ENCODE measurements at regions of chr20 and their contacts with region 1.

Region 1: DNA sequence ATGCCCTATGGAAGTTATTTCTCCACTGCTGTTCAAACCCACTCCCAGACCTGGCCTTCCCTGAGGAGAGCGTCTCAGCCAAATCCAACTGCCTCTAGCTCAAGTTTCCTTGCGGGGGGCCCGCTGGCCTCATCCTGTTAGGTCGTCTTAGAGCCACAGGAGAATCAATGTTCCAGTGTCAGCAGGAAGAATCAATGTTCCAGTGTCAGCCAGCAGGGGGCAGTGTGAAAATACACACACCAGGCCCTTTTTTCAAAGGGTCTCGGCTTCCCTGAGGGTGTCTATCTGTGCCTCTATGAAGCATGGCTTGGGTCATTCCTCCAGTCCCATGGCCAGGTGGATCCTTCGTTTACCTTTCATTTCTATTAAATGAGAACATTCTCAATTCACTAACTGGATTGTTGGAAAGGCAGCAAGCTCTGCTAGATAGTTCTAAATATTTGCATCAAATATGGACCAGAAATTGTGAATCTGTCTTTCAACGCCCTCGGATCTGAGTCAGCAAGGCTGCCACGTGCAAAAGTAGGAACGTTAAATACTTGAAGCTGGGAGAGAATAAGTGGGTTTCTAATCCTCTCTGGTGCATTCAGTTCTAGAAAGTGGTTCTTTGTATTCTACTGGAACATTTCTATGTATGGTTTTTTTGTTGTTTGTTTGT is 19.2 kb downstream of the PRND start:
- H3K4me3 ChIP-seq: no peak overlapping the region
- H3K27ac ChIP-seq: no peak overlapping the region
- H3K4me1 ChIP-seq: no peaks in the 10 kb centered on the region
- CTCF ChIP-seq: 0 out of 2 replicates have a peak, but pooled peaks have one; percentile 37

Region 2: GRCh38 chr20:4607287-4607713 is 133.6 kb before region 1 on chr20:
- CTCF ChIA-PET with region 1: interaction called, 24 read pairs
- POLR2A ChIA-PET with region 1: no interaction called
- H3K4me3 ChIP-seq: no peak overlapping the region
- H3K27ac ChIP-seq: no peak overlapping the region
- H3K4me1 ChIP-seq: peaks cover 18% of the 10 kb centered on the region
- CTCF ChIP-seq: peak; percentile 76

Region 3: DNA sequence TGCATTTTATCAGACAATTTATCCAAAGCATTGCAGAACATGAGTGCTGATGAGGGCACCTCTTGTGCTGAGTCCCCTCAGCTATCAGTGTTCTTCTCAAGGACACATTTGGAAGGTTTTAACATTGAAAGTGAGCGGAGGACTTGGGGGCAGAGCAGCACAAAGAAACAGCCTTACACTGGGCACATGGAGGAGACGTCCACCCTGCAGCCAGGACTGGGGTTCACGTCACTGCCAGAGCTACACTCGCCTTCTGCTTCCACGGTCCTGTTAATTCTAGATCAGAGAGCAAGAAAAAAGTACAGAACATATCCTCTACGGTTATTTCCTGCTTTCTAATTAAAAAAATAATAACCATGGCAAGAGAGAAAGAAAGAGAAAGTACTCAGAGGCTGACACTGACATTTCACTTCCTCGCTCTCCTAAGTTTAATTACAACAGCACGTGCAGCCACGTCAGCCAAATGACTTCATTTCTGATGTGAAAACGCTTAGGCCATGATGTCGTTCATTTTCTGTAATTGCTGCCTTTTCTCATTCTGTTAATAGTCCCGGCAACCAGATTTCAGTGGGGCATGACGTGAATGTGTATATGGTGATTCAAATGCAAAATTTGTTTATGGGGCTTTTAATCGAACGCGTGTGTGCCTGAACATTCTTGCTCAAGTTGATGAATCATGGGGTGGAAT is 14.0 kb before region 1 on chr20:
- CTCF ChIA-PET with region 1: interaction called, 46 read pairs
- POLR2A ChIA-PET with region 1: no interaction called
- H3K4me3 ChIP-seq: no peak overlapping the region
- H3K27ac ChIP-seq: no peak overlapping the region
- H3K4me1 ChIP-seq: no peaks in the 10 kb centered on the region
- CTCF ChIP-seq: no peak

Region 4: GRCh38 chr20:4829514-4830215 is 88.8 kb after region 1 on chr20:
- CTCF ChIA-PET with region 1: no interaction called
- POLR2A ChIA-PET with region 1: no interaction called
- H3K4me3 ChIP-seq: no peak overlapping the region
- H3K27ac ChIP-seq: no peak overlapping the region; the same call in 1 of the 2 replicates
- H3K4me1 ChIP-seq: peaks cover 12% of the 10 kb centered on the region
- CTCF ChIP-seq: no peak

Region 5: DNA sequence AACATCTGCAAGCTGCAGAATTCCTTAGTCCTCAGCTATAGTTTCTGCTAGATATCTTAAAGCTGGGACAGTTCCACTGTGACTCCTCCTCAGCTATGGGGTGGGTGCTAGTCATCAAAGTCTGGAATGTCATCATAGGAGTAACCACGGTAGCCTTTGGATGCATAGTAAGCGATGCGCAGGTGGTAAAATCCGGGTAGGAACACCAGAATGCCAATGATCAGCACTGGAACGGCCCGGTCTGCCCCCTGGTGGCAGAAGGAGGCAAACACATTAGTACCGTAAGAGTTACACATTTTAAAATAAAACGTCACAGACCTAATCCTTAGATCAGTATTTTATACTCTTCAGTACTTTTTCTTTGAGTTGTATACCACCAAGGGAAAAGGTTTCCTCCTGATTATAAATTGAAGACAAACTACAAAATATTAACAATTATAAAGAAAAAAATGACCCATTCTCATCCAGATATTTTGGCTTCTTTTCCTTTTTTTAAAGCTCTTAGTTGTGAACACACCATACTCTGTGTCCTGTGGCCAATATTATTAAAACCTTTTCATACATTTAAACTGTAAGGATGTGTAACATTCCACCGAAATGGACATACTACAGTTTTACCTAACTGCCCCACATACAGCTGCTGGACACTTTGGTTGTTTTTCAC is 359.9 kb after region 1 on chr20:
- CTCF ChIA-PET with region 1: interaction called, 23 read pairs
- POLR2A ChIA-PET with region 1: no interaction called
- H3K4me3 ChIP-seq: no peak overlapping the region
- H3K27ac ChIP-seq: no peak overlapping the region
- H3K4me1 ChIP-seq: no peaks in the 10 kb centered on the region
- CTCF ChIP-seq: peak; percentile 54

Measured in HEK293 (cell line).